ENCODE measurements at regions of chr15 and their contacts with region 1.

Region 1: GRCh38 chr15:61169904-61170695 is 59.0 kb downstream of the RORA start:
- DNase-seq: peak; percentile 85
- H3K4me3 ChIP-seq: no peak overlapping the region
- H3K27ac ChIP-seq: peak overlapping the region; percentile 82
- H3K4me1 ChIP-seq: peaks cover 64% of the 10 kb centered on the region
- H3K27me3 ChIP-seq: no peaks in the 10 kb centered on the region
- CTCF ChIP-seq: 0 out of 2 replicates have a peak, but pooled peaks have one; percentile 14

Region 2: GRCh38 chr15:61030451-61030850 is 139.6 kb before region 1 on chr15:
- CTCF ChIA-PET with region 1: no interaction called
- POLR2A ChIA-PET with region 1: no interaction called
- intact Hi-C with region 1: no loop called
- DNase-seq: no peak
- H3K4me3 ChIP-seq: no peak overlapping the region
- H3K27ac ChIP-seq: no peak overlapping the region
- H3K4me1 ChIP-seq: peaks cover 10% of the 10 kb centered on the region
- H3K27me3 ChIP-seq: no peaks in the 10 kb centered on the region
- CTCF ChIP-seq: no peak

Region 3: DNA sequence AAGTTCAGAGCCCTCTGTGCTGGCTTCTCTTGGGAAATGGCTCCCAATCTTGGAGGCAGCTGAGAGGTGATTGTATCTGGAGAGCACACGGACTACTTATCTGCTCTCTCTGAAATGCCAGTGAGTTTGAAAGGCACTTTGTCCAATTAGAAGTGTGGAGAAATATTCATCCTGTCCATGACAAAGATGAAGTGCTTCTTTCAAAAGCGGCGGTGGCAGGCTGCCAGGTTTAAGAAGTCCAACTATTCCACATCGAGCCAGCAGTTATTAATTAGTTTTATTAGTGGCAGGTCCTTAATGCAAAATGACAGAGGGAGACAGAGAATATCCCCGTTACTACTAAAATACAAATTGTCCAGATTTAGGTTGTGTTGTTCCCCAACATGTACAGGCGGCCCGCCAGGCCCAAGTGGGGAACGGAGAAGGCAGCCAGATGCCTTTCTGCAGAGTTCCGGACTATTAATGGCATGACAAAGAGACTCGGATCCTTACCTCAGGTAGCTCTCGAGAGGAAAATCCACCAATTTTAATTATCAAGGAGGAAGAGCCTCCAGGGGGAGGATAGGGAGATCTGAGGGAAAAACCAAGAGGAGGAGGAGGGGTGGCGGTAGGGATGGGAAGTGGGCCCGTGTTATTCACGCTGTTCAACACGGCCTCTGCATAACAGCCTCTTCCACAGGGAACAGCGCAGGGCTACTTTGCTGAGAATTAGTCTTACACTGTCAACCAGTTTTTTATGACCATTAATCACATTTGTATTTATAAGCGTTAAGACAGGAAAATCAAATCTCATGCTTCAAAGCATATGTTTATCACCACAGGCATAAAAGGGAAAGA is 17.0 kb after region 1 on chr15:
- CTCF ChIA-PET with region 1: interaction called, 3 read pairs
- POLR2A ChIA-PET with region 1: no interaction called
- intact Hi-C with region 1: loop called (anchors 1 kb)
- DNase-seq: peak; percentile 89
- H3K4me3 ChIP-seq: peak overlapping the region; percentile 21
- H3K27ac ChIP-seq: peak overlapping the region; percentile 68
- H3K4me1 ChIP-seq: peaks cover 24% of the 10 kb centered on the region
- H3K27me3 ChIP-seq: no peaks in the 10 kb centered on the region
- CTCF ChIP-seq: no peak

Region 4: DNA sequence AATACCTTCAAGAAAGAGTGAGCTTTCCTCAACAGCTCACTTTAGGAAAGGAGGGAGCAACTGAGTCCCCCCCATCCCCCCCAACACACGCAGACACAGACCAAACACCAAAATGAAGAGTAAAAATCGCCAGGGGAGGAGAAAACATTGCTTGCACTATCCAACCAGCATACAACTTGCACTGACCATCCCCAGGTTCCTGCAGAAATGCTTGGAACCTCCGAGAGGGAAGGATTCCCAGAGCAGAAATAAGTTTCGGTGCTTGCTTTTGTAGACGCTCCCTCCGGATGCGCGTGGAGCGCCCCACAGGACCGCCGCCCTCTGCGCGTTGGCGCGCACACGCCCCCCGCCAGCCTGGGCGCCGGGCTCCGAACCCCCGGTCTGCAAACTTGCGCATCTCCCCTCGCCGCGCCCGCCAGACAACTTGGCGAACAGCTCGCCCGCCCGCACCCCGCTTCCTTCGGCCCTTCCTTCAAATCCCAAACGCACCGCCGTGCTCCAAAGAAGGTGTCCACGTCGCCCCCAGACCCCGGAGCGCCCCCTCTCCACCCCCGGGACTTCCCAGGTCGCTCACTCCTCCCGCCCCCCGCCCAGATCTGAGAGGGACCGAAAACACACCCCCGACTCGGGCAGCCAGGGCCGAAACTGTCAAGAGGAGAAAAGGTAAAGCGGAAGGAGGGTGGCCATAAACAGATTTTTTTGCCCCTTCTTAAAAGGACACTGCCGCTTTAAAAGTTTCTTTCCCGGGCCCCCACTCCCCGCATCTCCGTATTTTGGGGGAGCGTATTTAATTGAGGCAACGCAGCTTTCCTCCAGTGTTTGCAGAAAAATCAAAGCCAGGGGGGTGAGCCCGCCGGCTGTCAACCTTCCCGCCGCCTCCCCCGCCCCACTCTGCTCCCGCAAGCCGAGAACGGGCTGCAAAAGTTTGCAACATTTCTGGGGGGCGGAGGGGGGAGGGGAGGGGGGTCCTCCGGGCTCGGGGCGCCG is 58.1 kb after region 1 on chr15:
- CTCF ChIA-PET with region 1: interaction called, 11 read pairs
- POLR2A ChIA-PET with region 1: no interaction called
- intact Hi-C with region 1: no loop called
- DNase-seq: peak; percentile 25
- H3K4me3 ChIP-seq: peak overlapping the region; percentile 77
- H3K27ac ChIP-seq: no peak overlapping the region
- H3K4me1 ChIP-seq: peaks cover 17% of the 10 kb centered on the region
- H3K27me3 ChIP-seq: peaks cover 16% of the 10 kb centered on the region
- CTCF ChIP-seq: no peak

Region 5: DNA sequence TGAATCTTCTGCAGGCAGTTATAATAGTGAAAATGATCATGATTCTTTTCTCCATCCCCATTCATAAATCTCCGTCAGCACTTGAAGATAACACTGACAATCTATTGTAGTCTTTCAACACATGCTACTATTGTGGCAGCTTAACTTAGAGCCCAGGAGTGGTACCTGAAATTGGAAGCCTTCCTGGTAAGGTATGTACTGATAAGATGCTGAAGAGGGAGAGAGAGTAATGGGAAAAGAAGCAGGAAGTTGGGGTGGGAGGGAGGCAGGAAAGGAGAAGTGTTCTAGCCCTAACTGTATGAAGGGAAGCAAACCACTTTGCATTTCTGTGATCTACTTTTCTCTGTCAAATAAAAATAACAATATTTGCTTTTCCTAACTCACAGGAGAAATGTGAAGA is 256.4 kb after region 1 on chr15:
- CTCF ChIA-PET with region 1: no interaction called
- POLR2A ChIA-PET with region 1: no interaction called
- intact Hi-C with region 1: no loop called
- DNase-seq: no peak
- H3K4me3 ChIP-seq: no peak overlapping the region
- H3K27ac ChIP-seq: no peak overlapping the region
- H3K4me1 ChIP-seq: no peaks in the 10 kb centered on the region
- H3K27me3 ChIP-seq: no peaks in the 10 kb centered on the region
- CTCF ChIP-seq: no peak

Region 6: GRCh38 chr15:61530779-61531178 is 360.7 kb after region 1 on chr15:
- CTCF ChIA-PET with region 1: no interaction called
- POLR2A ChIA-PET with region 1: no interaction called
- intact Hi-C with region 1: loop called (anchors 10 kb)
- DNase-seq: peak; percentile 67
- H3K4me3 ChIP-seq: no peak overlapping the region
- H3K27ac ChIP-seq: no peak overlapping the region
- H3K4me1 ChIP-seq: no peaks in the 10 kb centered on the region
- H3K27me3 ChIP-seq: no peaks in the 10 kb centered on the region
- CTCF ChIP-seq: peak; percentile 48

Region 7: GRCh38 chr15:61556037-61556648 is 386.0 kb after region 1 on chr15:
- CTCF ChIA-PET with region 1: interaction called, 14 read pairs
- POLR2A ChIA-PET with region 1: no interaction called
- intact Hi-C with region 1: no loop called
- DNase-seq: no peak
- H3K4me3 ChIP-seq: no peak overlapping the region
- H3K27ac ChIP-seq: no peak overlapping the region
- H3K4me1 ChIP-seq: no peaks in the 10 kb centered on the region
- H3K27me3 ChIP-seq: peaks cover 7% of the 10 kb centered on the region
- CTCF ChIP-seq: no peak

Region 8: GRCh38 chr15:61621146-61621545 is 451.0 kb after region 1 on chr15:
- CTCF ChIA-PET with region 1: interaction called, 8 read pairs
- POLR2A ChIA-PET with region 1: no interaction called
- intact Hi-C with region 1: loop called (anchors 10 kb)
- DNase-seq: peak; percentile 36
- H3K4me3 ChIP-seq: no peak overlapping the region
- H3K27ac ChIP-seq: no peak overlapping the region
- H3K4me1 ChIP-seq: peaks cover 3% of the 10 kb centered on the region
- H3K27me3 ChIP-seq: no peaks in the 10 kb centered on the region
- CTCF ChIP-seq: peak; percentile 55

Region 9: DNA sequence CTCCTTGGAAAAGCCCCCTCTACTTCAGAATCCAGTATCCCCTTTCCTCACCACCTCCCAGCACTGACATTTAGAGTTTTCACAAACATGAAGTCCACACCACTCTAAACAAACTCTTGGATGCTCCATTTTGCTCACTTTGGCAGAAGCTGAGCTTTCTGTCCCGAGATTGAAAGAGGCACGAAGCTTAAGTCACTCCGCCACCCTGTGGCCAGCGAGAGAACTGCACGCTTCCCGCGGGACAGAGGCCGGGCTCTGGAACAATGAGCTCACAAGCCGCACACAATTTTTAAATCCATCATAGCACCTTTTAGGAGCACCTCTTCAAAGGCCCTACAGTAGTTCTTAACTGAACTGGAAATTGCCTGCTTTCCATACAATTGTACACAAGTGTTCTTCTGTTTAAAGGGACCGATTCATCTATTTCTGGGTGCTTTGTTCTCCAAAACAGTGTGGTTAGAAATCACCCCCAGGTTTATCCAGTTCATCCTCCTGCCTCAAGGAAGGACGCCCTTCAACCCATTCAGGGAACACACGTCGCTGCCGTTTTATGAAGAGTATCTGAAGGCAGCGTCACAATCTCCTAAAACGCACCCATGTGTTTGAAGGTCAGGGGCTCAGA is 664.1 kb after region 1 on chr15:
- CTCF ChIA-PET with region 1: interaction called, 23 read pairs
- POLR2A ChIA-PET with region 1: no interaction called
- intact Hi-C with region 1: loop called (anchors 2 kb)
- DNase-seq: peak; percentile 83
- H3K4me3 ChIP-seq: no peak overlapping the region
- H3K27ac ChIP-seq: no peak overlapping the region
- H3K4me1 ChIP-seq: no peaks in the 10 kb centered on the region
- H3K27me3 ChIP-seq: no peaks in the 10 kb centered on the region
- CTCF ChIP-seq: peak; percentile 98

Measured in A673 (cell line).